T-cell (primary cell): ENCODE measurements at regions of chr5 and their contacts with region 1.

Region 1: GRCh38 chr5:141992349-141992963 is 20.4 kb downstream of the GNPDA1 start:
- DNase-seq: peak; percentile 35 to 89 (median 73)
- ATAC-seq: peak; percentile 68 to 81 (median 74)
- H3K4me3 ChIP-seq: no peak overlapping the region
- H3K4me3 Mint-ChIP-seq: no peak overlapping the region
- H3K27ac ChIP-seq: no peak overlapping the region
- H3K27ac Mint-ChIP-seq: no peak overlapping the region
- H3K4me1 ChIP-seq: no peaks in the 10 kb centered on the region
- H3K4me1 Mint-ChIP-seq: peaks cover 5 to 9% (median 6%) of the 10 kb centered on the region in 3 donors
- H3K27me3 ChIP-seq: no peaks in the 10 kb centered on the region
- H3K27me3 Mint-ChIP-seq: no peaks in the 10 kb centered on the region

Region 2: GRCh38 chr5:141320225-141321169 is 672.0 kb before region 1 on chr5 and contains the start of gene TAF7:
- CTCF ChIA-PET with region 1: no interaction called
- POLR2A ChIA-PET with region 1: interaction called in 1 of 2 experiments, 12 read pairs
- DNase-seq: peak; percentile 82 to 96 (median 89)
- ATAC-seq: peak; percentile 92 to 93 (median 92)
- H3K4me3 ChIP-seq: peak within 1 kb of the TSS; percentile 90 to 98
- H3K4me3 Mint-ChIP-seq: peak within 1 kb of the TSS; percentile 97 to 99 (median 99)
- H3K27ac ChIP-seq: peak within 1 kb of the TSS; percentile 98
- H3K27ac Mint-ChIP-seq: peak within 1 kb of the TSS; percentile 97 to 98
- H3K4me1 ChIP-seq: peaks cover 2 to 19% of the 10 kb centered on the region in 2 experiments
- H3K4me1 Mint-ChIP-seq: peaks cover 30 to 35% (median 33%) of the 10 kb centered on the region in 3 donors
- H3K27me3 ChIP-seq: no peaks in the 10 kb centered on the region
- H3K27me3 Mint-ChIP-seq: peaks cover 2 to 3% of the 10 kb centered on the region in 2 donors
- total RNA-seq, gene TAF7: 83.7 to 103 (median 101) TPM

Region 3: GRCh38 chr5:141870871-141871270 is 121.6 kb before region 1 on chr5:
- CTCF ChIA-PET with region 1: no interaction called
- POLR2A ChIA-PET with region 1: no interaction called
- DNase-seq: no peak
- ATAC-seq: no peak
- H3K4me3 ChIP-seq: no peak overlapping the region
- H3K4me3 Mint-ChIP-seq: no peak overlapping the region
- H3K27ac ChIP-seq: no peak overlapping the region
- H3K27ac Mint-ChIP-seq: peak overlapping the region in 1 of 2 donors; percentile 9
- H3K4me1 ChIP-seq: peaks cover 0 to 6% of the 10 kb centered on the region in 2 experiments
- H3K4me1 Mint-ChIP-seq: peaks cover 0 to 8% (median 5%) of the 10 kb centered on the region in 3 donors
- H3K27me3 ChIP-seq: peaks cover 10 to 51% of the 10 kb centered on the region in 2 experiments
- H3K27me3 Mint-ChIP-seq: peaks cover 51 to 55% of the 10 kb centered on the region in 2 donors

Region 4: DNA sequence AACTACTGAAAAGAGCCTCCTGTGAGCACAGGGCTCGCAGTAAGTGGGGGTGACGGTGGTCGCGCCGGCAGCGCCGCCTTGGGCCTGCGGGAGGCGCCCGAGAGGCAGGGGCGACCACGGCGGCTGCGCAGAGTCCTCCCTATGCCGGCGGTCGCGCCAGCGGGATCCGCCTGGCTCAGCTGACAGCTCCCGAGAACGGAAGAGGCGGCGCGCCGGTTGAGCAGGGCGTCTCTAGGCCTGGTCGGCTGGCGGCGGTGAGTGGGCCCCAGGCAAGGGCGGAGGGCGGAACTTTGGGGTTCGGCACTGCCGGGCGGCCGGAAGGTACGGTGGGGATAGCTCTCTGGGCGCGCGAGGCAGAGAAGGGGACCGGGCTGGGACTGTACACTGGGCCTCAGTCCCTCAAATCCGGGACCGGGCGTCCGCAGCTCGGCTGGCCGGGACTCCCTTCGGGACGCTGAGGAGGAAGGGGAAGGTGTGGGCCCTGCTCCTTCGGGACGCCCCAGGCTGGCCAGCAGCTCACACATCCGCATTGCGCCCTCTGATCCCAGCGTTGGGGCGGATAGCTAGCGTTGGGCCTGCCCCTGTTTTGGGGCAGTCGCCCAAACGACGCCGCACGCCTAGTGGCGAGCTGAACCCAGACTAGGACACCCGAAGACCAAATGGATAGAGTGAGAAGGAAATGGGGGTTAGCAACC is 23.4 kb before region 1 on chr5 and contains the start of gene RNF14:
- CTCF ChIA-PET with region 1: interaction called, 15 to 21 read pairs
- POLR2A ChIA-PET with region 1: interaction called in 1 of 2 experiments, 5 read pairs
- DNase-seq: peak; percentile 86 to 95 (median 92)
- ATAC-seq: peak; percentile 96 to 98 (median 97)
- H3K4me3 ChIP-seq: peak within 1 kb of the TSS; percentile 92 to 96
- H3K4me3 Mint-ChIP-seq: peak within 1 kb of the TSS; percentile 90 to 96 (median 92)
- H3K27ac ChIP-seq: peak within 1 kb of the TSS; percentile 89
- H3K27ac Mint-ChIP-seq: peak within 1 kb of the TSS; percentile 94 to 96
- H3K4me1 ChIP-seq: peaks cover 17 to 19% of the 10 kb centered on the region in 2 experiments
- H3K4me1 Mint-ChIP-seq: peaks cover 32 to 43% (median 38%) of the 10 kb centered on the region in 3 donors
- H3K27me3 ChIP-seq: no peaks in the 10 kb centered on the region
- H3K27me3 Mint-ChIP-seq: no peaks in the 10 kb centered on the region
- total RNA-seq, gene RNF14: 16.4 to 35.8 (median 28.2) TPM

Region 5: GRCh38 chr5:141976176-141976575 is 16.3 kb before region 1 on chr5:
- CTCF ChIA-PET with region 1: interaction called, 9 to 10 read pairs
- POLR2A ChIA-PET with region 1: interaction called in 1 of 2 experiments, 3 read pairs
- DNase-seq: no peak
- ATAC-seq: no peak
- H3K4me3 ChIP-seq: no peak overlapping the region
- H3K4me3 Mint-ChIP-seq: no peak overlapping the region
- H3K27ac ChIP-seq: no peak overlapping the region
- H3K27ac Mint-ChIP-seq: no peak overlapping the region
- H3K4me1 ChIP-seq: peaks cover 0 to 2% of the 10 kb centered on the region in 2 experiments
- H3K4me1 Mint-ChIP-seq: peaks cover 18 to 34% (median 26%) of the 10 kb centered on the region in 3 donors
- H3K27me3 ChIP-seq: no peaks in the 10 kb centered on the region
- H3K27me3 Mint-ChIP-seq: no peaks in the 10 kb centered on the region

Region 6: DNA sequence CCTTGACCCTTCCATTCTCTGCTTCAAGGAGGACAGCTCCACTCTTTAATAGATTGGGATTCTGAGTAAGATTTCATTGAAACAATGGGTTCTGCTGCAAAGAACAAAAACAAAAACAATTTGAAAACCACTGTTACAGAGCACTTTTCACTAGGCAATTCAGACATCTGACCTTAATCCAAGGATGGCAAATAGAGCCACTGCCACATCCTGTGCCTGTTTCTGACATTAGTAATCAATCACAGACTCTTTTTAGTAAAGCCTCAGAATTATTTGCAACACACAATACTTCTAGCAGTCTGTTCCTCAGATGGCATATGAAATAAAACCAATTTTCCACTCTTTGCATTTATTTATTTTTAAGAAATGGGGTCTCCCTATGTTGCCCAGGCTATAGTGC is 78.3 kb after region 1 on chr5:
- CTCF ChIA-PET with region 1: no interaction called
- POLR2A ChIA-PET with region 1: no interaction called
- DNase-seq: no peak
- ATAC-seq: no peak
- H3K4me3 ChIP-seq: no peak overlapping the region
- H3K4me3 Mint-ChIP-seq: no peak overlapping the region
- H3K27ac ChIP-seq: no peak overlapping the region
- H3K27ac Mint-ChIP-seq: no peak overlapping the region
- H3K4me1 ChIP-seq: peaks cover 0 to 3% of the 10 kb centered on the region in 2 experiments
- H3K4me1 Mint-ChIP-seq: peaks cover 13 to 17% (median 13%) of the 10 kb centered on the region in 3 donors
- H3K27me3 ChIP-seq: peaks cover 0 to 4% of the 10 kb centered on the region in 2 experiments
- H3K27me3 Mint-ChIP-seq: no peaks in the 10 kb centered on the region

Region 7: GRCh38 chr5:142095651-142096330 is 103.3 kb after region 1 on chr5:
- CTCF ChIA-PET with region 1: interaction called in 1 of 2 experiments, 3 read pairs
- POLR2A ChIA-PET with region 1: interaction called in 1 of 2 experiments, 12 read pairs
- DNase-seq: peak; percentile 54 to 94 (median 85)
- ATAC-seq: peak; percentile 92 to 98 (median 97)
- H3K4me3 ChIP-seq: peak overlapping the region in 1 of 2 donors; percentile 4
- H3K4me3 Mint-ChIP-seq: peak overlapping the region; percentile 10 to 70 (median 43)
- H3K27ac ChIP-seq: peak overlapping the region; percentile 89
- H3K27ac Mint-ChIP-seq: peak overlapping the region; percentile 90 to 94
- H3K4me1 ChIP-seq: peaks cover 38 to 47% of the 10 kb centered on the region in 2 experiments
- H3K4me1 Mint-ChIP-seq: peaks cover 49 to 59% (median 56%) of the 10 kb centered on the region in 3 donors
- H3K27me3 ChIP-seq: no peaks in the 10 kb centered on the region
- H3K27me3 Mint-ChIP-seq: no peaks in the 10 kb centered on the region

Region 8: GRCh38 chr5:142145106-142145900 is 152.8 kb after region 1 on chr5:
- CTCF ChIA-PET with region 1: interaction called, 60 to 147 read pairs
- POLR2A ChIA-PET with region 1: interaction called, 3 to 10 read pairs
- DNase-seq: peak in 34 of 35 experiments; percentile 28 to 76 (median 52)
- ATAC-seq: peak; percentile 64 to 86 (median 80)
- H3K4me3 ChIP-seq: no peak overlapping the region
- H3K4me3 Mint-ChIP-seq: no peak overlapping the region
- H3K27ac ChIP-seq: no peak overlapping the region
- H3K27ac Mint-ChIP-seq: no peak overlapping the region
- H3K4me1 ChIP-seq: no peaks in the 10 kb centered on the region
- H3K4me1 Mint-ChIP-seq: peaks cover 0 to 16% (median 7%) of the 10 kb centered on the region in 3 donors
- H3K27me3 ChIP-seq: no peaks in the 10 kb centered on the region
- H3K27me3 Mint-ChIP-seq: no peaks in the 10 kb centered on the region

Region 9: DNA sequence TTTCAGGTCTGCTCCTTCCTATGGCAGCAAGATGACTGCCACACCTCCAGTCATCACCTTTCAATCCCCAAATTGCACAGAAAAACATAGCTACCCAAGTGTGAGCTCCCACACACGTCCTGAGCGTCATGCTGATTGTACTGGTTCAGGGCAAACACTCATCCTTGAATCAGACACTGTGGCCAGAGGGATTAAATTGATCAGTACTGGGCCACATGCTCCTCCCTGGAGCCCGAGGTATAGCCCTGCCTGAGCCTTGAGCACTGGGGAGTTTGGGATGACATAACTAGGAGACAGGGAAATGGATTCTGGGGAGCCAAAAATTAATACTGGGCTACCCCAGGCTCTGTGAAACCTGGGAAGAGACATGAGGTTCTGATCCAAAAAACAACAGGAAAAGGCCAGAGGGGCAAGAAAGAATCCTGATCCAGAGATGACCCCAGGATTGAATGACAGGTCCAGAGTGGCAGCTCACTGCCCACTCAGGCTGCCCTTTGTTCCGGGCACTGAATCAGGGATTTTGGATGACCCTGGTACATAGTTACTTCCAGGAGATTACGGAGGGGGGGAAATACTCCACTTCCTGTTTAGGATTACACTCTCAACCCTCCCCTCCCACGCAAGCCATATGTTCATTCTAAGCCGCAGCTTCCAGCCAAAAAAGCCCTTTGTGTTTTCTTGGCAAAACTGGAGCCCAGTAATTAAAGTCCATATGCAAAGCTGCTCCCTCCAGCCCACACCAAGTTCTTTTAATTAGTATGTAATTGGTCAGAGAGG is 473.9 kb after region 1 on chr5:
- CTCF ChIA-PET with region 1: no interaction called
- POLR2A ChIA-PET with region 1: no interaction called
- DNase-seq: no peak
- ATAC-seq: no peak
- H3K4me3 ChIP-seq: no peak overlapping the region
- H3K4me3 Mint-ChIP-seq: no peak overlapping the region
- H3K27ac ChIP-seq: no peak overlapping the region
- H3K27ac Mint-ChIP-seq: no peak overlapping the region
- H3K4me1 ChIP-seq: no peaks in the 10 kb centered on the region
- H3K4me1 Mint-ChIP-seq: peaks cover 0 to 3% (median 0%) of the 10 kb centered on the region in 3 donors
- H3K27me3 ChIP-seq: no peaks in the 10 kb centered on the region
- H3K27me3 Mint-ChIP-seq: no peaks in the 10 kb centered on the region